ENCODE measurements at regions of chr10 and their contacts with region 1.

Region 1: GRCh38 chr10:128263891-128264688 is 137.9 kb upstream of the MKI67 start:
- DNase-seq: peak; percentile 23
- ATAC-seq: peak; percentile 90
- H3K4me3 ChIP-seq: no peak overlapping the region
- H3K27ac ChIP-seq: no peak overlapping the region
- H3K4me1 ChIP-seq: no peaks in the 10 kb centered on the region
- H3K27me3 ChIP-seq: peaks cover 2 to 48% of the 10 kb centered on the region in 2 experiments; a peak in 3 of 5 replicates
- CTCF ChIP-seq: peak; percentile 66
- EP300 ChIP-seq: no peak
- POLR2A ChIP-seq: no peak
- RAD21 ChIP-seq: no peak

Region 2: DNA sequence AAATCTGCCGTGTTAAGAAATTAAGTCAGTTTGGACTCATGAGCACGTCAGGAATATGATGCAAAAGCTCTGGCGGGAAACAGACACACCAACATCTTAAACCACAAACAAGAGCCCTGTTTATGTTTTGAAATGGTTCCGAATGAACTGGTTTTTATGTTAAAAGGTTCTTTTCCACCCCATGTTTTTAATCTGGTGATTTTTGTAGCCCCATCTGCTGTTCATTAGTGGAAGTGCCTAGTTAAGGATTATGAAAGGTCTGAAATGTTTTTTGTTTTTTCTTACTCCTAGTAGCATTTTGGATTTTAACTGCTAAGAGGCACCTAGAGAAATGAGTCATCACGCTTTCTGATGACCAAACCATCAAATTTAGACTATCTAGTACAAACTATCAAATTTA is 266.2 kb after region 1 on chr10:
- CTCF ChIA-PET with region 1: interaction called, 6 read pairs
- POLR2A ChIA-PET with region 1: no interaction called
- in situ Hi-C with region 1: loop called (anchors 5 kb)
- intact Hi-C with region 1: loop called (anchors 1 kb)
- DNase-seq: no peak
- ATAC-seq: no peak
- H3K4me3 ChIP-seq: no peak overlapping the region
- H3K27ac ChIP-seq: no peak overlapping the region
- H3K4me1 ChIP-seq: no peaks in the 10 kb centered on the region
- H3K27me3 ChIP-seq: peaks cover 1 to 58% of the 10 kb centered on the region in 2 experiments; a peak in 4 of 5 replicates
- CTCF ChIP-seq: peak; percentile 31
- EP300 ChIP-seq: no peak
- POLR2A ChIP-seq: no peak
- RAD21 ChIP-seq: no peak

Region 3: GRCh38 chr10:128808921-128809440 is 544.9 kb after region 1 on chr10:
- CTCF ChIA-PET with region 1: no interaction called
- POLR2A ChIA-PET with region 1: no interaction called
- in situ Hi-C with region 1: no loop called
- intact Hi-C with region 1: no loop called
- DNase-seq: no peak
- ATAC-seq: no peak
- H3K4me3 ChIP-seq: no peak overlapping the region
- H3K27ac ChIP-seq: no peak overlapping the region
- H3K4me1 ChIP-seq: no peaks in the 10 kb centered on the region
- H3K27me3 ChIP-seq: 0 out of 5 replicates have a peak, but pooled peaks cover 0 to 10% of the 10 kb centered on the region in 2 experiments
- CTCF ChIP-seq: no peak
- EP300 ChIP-seq: no peak
- POLR2A ChIP-seq: no peak
- RAD21 ChIP-seq: no peak

Region 4: DNA sequence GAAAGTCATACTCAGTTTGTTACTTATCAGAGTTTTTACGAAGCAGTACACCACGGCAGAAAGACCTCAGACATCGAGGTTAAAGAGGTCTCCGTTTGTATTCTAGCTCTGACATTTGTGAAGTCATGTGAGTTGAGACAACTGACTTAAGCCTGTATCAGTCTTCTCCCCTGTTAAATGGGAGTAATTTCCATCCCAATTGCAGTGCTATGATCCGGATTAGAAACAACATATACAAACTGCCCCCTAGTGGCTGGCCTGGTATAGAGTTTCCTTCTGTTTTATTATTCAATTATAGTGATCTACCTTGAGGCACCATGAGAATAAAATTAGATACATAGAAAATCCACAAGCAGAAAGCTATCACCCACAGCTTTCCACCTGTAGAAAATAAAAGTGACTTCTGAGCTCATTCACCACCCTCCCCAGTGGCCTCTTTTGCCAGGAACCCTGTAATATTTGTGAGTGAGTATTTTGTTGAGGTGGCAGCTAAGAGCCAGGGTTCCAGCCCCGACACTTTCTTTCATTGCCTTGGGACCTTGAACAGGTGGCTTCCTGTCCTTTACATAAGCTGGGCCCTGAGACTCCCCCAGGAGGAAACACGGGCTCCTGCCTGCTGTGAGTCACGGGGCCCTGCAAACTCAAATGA is 595.8 kb after region 1 on chr10:
- CTCF ChIA-PET with region 1: interaction called, 6 read pairs
- POLR2A ChIA-PET with region 1: no interaction called
- in situ Hi-C with region 1: loop called (anchors 25 kb)
- intact Hi-C with region 1: loop called (anchors 2 kb)
- DNase-seq: peak; percentile 24
- ATAC-seq: no peak
- H3K4me3 ChIP-seq: no peak overlapping the region
- H3K27ac ChIP-seq: no peak overlapping the region
- H3K4me1 ChIP-seq: peaks cover 13% of the 10 kb centered on the region
- H3K27me3 ChIP-seq: peaks cover 0 to 3% of the 10 kb centered on the region in 2 experiments; a peak in 1 of 5 replicates
- CTCF ChIP-seq: peak; percentile 54
- EP300 ChIP-seq: no peak
- POLR2A ChIP-seq: no peak
- RAD21 ChIP-seq: no peak

Region 5: DNA sequence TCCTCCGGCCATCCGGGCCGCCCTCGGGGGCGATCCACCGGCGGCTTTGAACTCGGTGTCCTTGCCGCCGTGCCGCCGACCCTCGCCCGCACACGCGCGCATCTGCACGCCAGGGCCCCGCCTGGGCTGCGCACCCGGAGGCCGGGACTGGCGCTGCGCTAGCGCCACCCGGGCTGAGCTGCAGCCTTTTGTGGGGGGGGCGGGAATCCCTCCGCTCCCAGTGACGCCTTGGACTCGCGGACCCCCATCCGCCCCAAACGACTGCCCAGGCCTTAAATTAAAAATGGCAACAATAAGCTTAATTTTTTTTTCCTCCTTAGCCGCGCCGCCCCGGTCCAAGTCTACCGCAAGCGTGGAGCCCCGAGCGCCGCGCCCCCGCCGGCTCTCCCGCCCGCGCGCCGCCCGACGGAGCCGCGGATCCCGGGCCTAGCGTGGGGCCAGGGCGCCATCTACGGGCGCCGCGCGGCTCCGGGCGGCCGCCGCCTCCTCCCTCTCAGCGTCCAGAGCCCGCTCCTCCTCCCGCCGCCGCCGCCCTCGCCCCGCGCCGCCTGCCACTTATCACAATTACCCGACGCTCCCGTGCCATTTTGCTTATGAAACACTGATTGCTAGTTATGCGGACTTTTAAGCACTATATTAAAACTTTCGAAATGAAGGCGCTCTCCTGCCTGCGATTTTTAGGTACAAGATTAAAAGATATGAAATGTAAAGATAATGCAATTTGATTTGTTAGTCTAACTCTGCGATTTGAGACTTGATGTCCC is 1707.5 kb after region 1 on chr10:
- CTCF ChIA-PET with region 1: no interaction called
- POLR2A ChIA-PET with region 1: no interaction called
- in situ Hi-C with region 1: loop called (anchors 25 kb)
- intact Hi-C with region 1: no loop called
- DNase-seq: peak; percentile 8
- ATAC-seq: peak; percentile 89
- H3K4me3 ChIP-seq: peak overlapping the region in 2 of 3 experiments; percentile 40 to 59; a peak in 3 of 6 replicates
- H3K27ac ChIP-seq: no peak overlapping the region
- H3K4me1 ChIP-seq: no peaks in the 10 kb centered on the region
- H3K27me3 ChIP-seq: peaks cover 6 to 66% of the 10 kb centered on the region in 2 experiments
- CTCF ChIP-seq: peak; percentile 52
- EP300 ChIP-seq: no peak
- POLR2A ChIP-seq: no peak
- RAD21 ChIP-seq: peak; percentile 90

Measured in HepG2 (cell line).